ENCODE measurements at regions of chr16 and their contacts with region 1.

Region 1: GRCh38 chr16:31202414-31203375 is at the start of gene PYCARD:
- DNase-seq: no peak
- ATAC-seq: peak; percentile 34
- H3K4me3 ChIP-seq: peak within 1 kb of the TSS; percentile 59 to 86 (median 78)
- H3K4me3 Mint-ChIP-seq: peak within 1 kb of the TSS; percentile 92
- H3K27ac ChIP-seq: peak within 1 kb of the TSS; percentile 62 to 73
- H3K27ac Mint-ChIP-seq: peak within 1 kb of the TSS; percentile 95
- H3K4me1 ChIP-seq: peaks cover 32 to 48% of the 10 kb centered on the region in 2 donors
- H3K4me1 Mint-ChIP-seq: peaks cover 55% of the 10 kb centered on the region
- H3K27me3 ChIP-seq: no peaks in the 10 kb centered on the region
- H3K27me3 Mint-ChIP-seq: no peaks in the 10 kb centered on the region
- CTCF ChIP-seq: no peak
- total RNA-seq, gene PYCARD: 31.8 and 35.7 TPM in 2 replicates

Region 2: DNA sequence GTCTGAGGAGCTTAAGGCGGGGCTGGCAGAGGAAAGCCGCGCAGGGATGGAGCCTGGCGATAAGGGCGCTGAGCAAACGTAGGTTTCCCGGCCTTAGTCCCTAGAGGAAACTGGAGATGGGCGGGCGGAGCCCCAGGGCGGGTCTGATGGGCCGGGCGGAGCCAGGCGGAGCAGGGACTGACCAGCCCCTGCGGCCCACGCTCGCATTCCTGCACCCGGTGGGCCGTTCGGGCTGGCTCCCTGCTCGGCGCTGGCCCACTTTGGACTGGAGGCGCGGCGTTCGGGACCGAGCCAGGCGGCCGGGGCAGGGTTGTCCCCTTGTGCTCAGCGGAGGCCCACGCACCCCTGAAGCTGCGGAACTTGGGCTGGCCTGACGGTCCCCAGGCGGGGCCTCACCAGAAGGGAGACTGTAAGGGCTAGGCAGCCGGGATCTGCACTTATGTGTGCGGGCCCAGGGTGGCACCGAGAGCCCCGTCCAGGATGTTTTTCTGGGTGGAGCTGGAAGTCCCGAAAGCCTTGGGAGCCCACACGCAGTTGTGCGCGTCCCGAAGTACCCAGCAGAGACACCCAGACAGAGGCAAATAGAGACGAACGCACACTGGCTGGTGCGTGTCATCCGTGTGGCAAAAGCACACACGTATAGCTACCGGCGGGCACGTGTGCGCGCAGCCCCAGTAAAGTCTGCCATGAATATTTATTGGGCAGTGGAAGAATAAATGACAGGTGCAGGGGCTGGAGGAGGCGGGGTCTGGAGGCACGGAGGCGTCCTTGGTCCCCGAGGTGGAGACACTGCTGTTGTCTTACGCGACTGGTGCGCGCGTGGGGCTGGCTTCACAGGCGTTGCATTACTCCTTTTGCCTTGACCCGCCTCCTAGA is 12.8 kb after region 1 on chr16:
- CTCF ChIA-PET with region 1: interaction called, 21 read pairs
- POLR2A ChIA-PET with region 1: interaction called, 11 read pairs
- intact Hi-C with region 1: loop called (anchors 2 kb)
- DNase-seq: peak; percentile 62
- ATAC-seq: peak; percentile 45
- H3K4me3 ChIP-seq: peak overlapping the region; percentile 21 to 56 (median 46)
- H3K4me3 Mint-ChIP-seq: peak overlapping the region; percentile 84
- H3K27ac ChIP-seq: no peak overlapping the region
- H3K27ac Mint-ChIP-seq: no peak overlapping the region
- H3K4me1 ChIP-seq: peaks cover 41 to 42% of the 10 kb centered on the region in 2 donors
- H3K4me1 Mint-ChIP-seq: peaks cover 42% of the 10 kb centered on the region
- H3K27me3 ChIP-seq: peaks cover 0 to 58% (median 28%) of the 10 kb centered on the region in 4 experiments
- H3K27me3 Mint-ChIP-seq: peaks cover 37% of the 10 kb centered on the region
- CTCF ChIP-seq: no peak

Region 3: GRCh38 chr16:31333686-31334649 is 131.3 kb after region 1 on chr16:
- CTCF ChIA-PET with region 1: interaction called, 35 read pairs
- POLR2A ChIA-PET with region 1: no interaction called
- intact Hi-C with region 1: loop called (anchors 1 kb)
- DNase-seq: peak; percentile 68
- ATAC-seq: peak; percentile 85
- H3K4me3 ChIP-seq: no peak overlapping the region
- H3K4me3 Mint-ChIP-seq: no peak overlapping the region
- H3K27ac ChIP-seq: no peak overlapping the region
- H3K27ac Mint-ChIP-seq: no peak overlapping the region
- H3K4me1 ChIP-seq: peaks cover 7 to 19% of the 10 kb centered on the region in 2 donors
- H3K4me1 Mint-ChIP-seq: peaks cover 23% of the 10 kb centered on the region
- H3K27me3 ChIP-seq: peaks cover 0 to 28% (median 4%) of the 10 kb centered on the region in 4 experiments
- H3K27me3 Mint-ChIP-seq: peaks cover 12% of the 10 kb centered on the region
- CTCF ChIP-seq: peak; percentile 64

Region 4: GRCh38 chr16:31382485-31383161 is 179.9 kb after region 1 on chr16:
- CTCF ChIA-PET with region 1: interaction called, 14 read pairs
- POLR2A ChIA-PET with region 1: interaction called, 3 read pairs
- intact Hi-C with region 1: no loop called
- DNase-seq: peak; percentile 68
- ATAC-seq: peak; percentile 61
- H3K4me3 ChIP-seq: no peak overlapping the region
- H3K4me3 Mint-ChIP-seq: no peak overlapping the region
- H3K27ac ChIP-seq: no peak overlapping the region
- H3K27ac Mint-ChIP-seq: peak overlapping the region; percentile 6
- H3K4me1 ChIP-seq: peaks cover 0 to 7% of the 10 kb centered on the region in 2 donors
- H3K4me1 Mint-ChIP-seq: peaks cover 16% of the 10 kb centered on the region
- H3K27me3 ChIP-seq: peaks cover 0 to 5% (median 0%) of the 10 kb centered on the region in 4 experiments
- H3K27me3 Mint-ChIP-seq: peaks cover 9% of the 10 kb centered on the region
- CTCF ChIP-seq: peak; percentile 74